H1 (cell line): ENCODE measurements at regions of chr7 and their contacts with region 1.

Region 1: DNA sequence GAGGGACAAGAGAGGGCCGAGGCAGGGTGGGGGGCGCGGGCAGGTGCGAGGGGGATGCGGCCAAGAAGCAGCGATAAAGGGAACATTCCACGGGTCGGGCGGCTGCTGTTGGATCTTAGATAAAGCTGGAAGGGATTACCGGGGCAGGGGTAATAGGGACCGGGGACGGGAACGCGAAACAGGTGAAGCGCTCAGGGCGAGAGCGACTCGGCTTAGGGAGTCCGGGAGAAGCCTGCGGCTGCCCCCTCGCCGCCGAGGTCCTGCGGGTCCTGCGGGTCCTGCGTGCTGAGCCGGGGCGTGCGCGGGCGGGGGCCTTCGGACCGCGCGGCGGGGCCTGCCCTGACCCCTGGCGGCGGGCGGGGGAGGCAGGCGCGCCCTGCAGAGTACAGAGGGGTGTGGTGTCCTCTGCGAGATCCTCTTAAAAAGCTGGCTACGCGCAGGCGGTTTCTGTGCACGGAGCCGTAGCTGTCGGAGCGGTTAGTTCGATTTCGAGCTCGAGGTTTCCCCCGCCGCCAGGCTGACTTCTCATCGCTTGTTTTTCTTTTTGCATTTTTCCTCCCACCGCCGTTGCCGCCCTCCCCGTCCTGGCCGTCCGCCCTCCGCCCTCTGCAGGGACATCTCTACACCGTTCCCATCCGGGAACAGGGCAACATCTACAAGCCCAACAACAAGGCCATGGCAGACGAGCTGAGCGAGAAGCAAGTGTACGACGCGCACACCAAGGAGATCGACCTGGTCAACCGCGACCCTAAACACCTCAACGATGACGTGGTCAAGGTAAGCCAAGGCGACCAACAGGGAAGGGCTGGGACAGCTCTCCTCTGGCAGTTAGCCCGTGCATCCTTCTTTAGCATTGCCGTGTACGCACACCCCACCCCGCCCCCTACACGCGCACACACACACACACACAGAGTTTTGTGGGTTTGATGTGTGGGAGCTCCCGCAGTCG is 1.4 kb downstream of the CAV1 start:
- DNase-seq: peak in 1 of 2 experiments; percentile 85
- H3K4me3 ChIP-seq: peak overlapping the region; percentile 72 to 97 (median 73)
- H3K27ac ChIP-seq: no peak overlapping the region
- H3K4me1 ChIP-seq: peaks cover 2 to 12% (median 10%) of the 10 kb centered on the region in 4 experiments; a peak in 5 of 7 replicates
- H3K27me3 ChIP-seq: peaks cover 0 to 20% (median 12%) of the 10 kb centered on the region in 4 experiments; a peak in 6 of 7 replicates
- CTCF ChIP-seq: peak; percentile 62 to 74 (median 64)
- EP300 ChIP-seq: no peak
- POLR2A ChIP-seq: peak in 1 of 2 experiments; percentile 5; a peak in 1 of 3 replicates
- RAD21 ChIP-seq: peak; percentile 20 to 67; a peak in 3 of 4 replicates

Region 2: DNA sequence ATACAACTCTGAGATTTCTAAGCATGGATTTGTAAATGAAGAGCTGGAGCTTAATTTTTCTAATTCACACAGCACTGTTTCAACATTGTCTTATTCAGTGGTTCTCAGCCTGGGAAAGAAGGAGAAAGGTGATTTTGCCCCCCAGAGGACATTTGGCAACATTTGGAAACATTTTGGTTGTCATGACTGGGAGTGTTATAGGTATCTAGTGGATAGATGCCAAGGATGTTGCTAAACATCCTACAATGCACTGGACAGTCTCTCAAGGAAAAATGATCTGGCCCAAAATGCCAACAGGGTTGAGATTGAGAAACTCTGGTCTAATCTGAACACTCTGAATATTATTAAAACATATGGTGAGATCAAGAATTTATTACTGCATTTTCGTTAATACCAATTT is 30.4 kb before region 1 on chr7:
- CTCF ChIA-PET with region 1: interaction called, 13 read pairs
- POLR2A ChIA-PET with region 1: interaction called, 5 read pairs
- DNase-seq: no peak
- H3K4me3 ChIP-seq: no peak overlapping the region
- H3K27ac ChIP-seq: no peak overlapping the region
- H3K4me1 ChIP-seq: peaks cover 1 to 3% (median 2%) of the 10 kb centered on the region in 4 experiments; a peak in 4 of 7 replicates
- H3K27me3 ChIP-seq: peaks cover 0 to 19% (median 12%) of the 10 kb centered on the region in 4 experiments; a peak in 6 of 7 replicates
- CTCF ChIP-seq: no peak
- EP300 ChIP-seq: no peak
- POLR2A ChIP-seq: no peak
- RAD21 ChIP-seq: 0 out of 4 replicates have a peak, but pooled peaks of 1 of the 2 experiments have one; percentile 13

Region 3: DNA sequence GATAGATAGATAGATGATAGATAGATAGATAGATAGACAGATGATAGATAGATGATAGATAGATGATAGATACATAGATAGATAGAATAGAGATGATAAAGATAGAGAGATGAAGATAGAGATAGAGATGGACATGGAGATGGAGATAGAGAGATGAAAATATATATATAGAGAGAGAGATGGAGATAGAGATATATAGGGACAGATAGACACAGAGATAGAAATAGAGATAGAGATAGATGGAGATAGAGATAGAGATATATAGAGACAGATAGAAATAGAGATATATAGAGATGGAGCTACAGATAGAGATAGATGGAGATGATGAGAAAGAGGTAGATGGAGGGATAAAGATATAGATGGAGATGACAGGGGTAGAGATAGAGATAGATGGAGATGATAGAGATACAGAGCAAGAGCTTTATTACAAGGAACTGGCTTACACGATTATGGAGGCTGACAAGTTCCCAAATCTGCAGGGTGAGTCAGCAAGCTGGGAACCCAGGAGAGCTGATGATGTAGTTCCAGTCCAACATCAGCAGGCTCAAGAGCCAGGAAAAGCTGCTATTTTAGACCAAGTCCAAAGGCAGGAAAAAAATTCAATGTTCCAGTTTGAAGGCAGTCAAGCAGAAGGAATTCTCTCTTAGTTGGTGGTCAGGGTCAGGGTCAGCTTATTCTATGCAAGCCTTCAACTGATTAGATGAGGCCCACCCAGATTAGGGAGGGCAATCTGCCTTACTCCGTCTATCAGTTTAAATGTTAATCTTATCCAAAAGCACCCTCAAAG is 35.7 kb after region 1 on chr7:
- CTCF ChIA-PET with region 1: interaction called, 10 read pairs
- POLR2A ChIA-PET with region 1: no interaction called
- DNase-seq: no peak
- H3K4me3 ChIP-seq: no peak overlapping the region
- H3K27ac ChIP-seq: no peak overlapping the region
- H3K4me1 ChIP-seq: peaks cover 0 to 3% (median 0%) of the 10 kb centered on the region in 4 experiments; a peak in 1 of 7 replicates
- H3K27me3 ChIP-seq: no peaks in the 10 kb centered on the region
- CTCF ChIP-seq: no peak
- EP300 ChIP-seq: no peak
- POLR2A ChIP-seq: no peak
- RAD21 ChIP-seq: no peak